GM18951 (cell line): ENCODE measurements at regions of chr6 and their contacts with region 1.

Region 1: GRCh38 chr6:31197559-31198305 is 27.2 kb upstream of the POU5F1 start:
- POLR2A ChIP-seq: peak; percentile 65

Region 2: DNA sequence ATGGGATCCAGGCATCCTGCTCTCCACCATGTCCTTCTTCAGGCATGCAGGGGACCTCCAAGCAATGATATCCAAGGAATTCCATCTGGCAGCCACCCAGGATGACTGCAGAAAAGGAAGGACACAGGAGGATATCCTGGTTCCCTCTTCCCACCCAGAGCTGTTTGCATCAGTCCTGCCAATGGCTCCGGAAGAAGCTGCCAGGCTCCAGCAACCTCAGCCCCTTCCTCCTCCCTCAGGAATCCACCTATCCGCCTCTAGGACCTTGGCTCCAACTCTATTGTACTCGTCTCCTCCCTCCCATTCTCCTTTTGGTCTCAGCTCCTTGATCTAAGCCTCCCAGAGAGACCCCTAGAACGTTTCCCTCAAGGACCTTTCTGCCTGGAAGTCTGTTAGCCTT is 58.1 kb before region 1 on chr6:
- in situ Hi-C with region 1: loop called (anchors 5 kb)
- POLR2A ChIP-seq: no peak

Region 3: GRCh38 chr6:31271641-31272357 is 74.1 kb after region 1 on chr6 and contains the start of gene HLA-C:
- in situ Hi-C with region 1: loop called (anchors 5 kb)
- POLR2A ChIP-seq: peak; percentile 72

Region 4: GRCh38 chr6:31366693-31367470 is 169.2 kb after region 1 on chr6:
- in situ Hi-C with region 1: loop called (anchors 5 kb)
- POLR2A ChIP-seq: no peak